GM23248 (cell line): ENCODE measurements at regions of chr20 and their contacts with region 1.

Region 1: DNA sequence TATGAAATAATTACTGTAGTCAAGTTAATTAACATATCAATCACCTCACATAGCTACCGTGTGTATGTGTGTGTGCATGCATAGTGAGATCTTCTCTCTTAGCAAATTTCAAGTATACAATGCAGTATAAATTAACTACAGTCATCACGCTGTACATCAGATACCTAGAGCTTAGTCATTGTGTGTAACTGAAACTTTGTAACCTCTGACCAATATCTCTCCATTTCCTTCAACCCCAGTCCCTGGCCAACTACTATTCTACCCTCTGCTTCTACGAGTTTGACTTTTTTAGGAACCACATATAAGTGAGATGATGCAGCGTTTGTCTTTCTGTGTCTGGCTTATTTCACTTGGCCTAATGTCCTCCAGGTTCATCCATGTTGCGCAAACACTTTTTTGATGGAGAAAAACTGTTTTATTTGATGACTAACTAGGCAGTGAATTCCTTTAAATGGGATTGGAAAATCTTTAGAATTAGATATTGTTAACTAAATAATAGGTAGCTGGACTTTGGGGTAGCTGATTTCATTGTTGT is 459.5 kb downstream of the DHX35 start:
- DNase-seq: peak; percentile 4
- H3K4me3 ChIP-seq: no peak overlapping the region
- H3K27ac ChIP-seq: no peak overlapping the region
- H3K4me1 ChIP-seq: no peaks in the 10 kb centered on the region
- H3K27me3 ChIP-seq: no peaks in the 10 kb centered on the region

Region 2: GRCh38 chr20:39112178-39112743 is 309.4 kb before region 1 on chr20:
- in situ Hi-C with region 1: no loop called
- DNase-seq: peak; percentile 62
- H3K4me3 ChIP-seq: no peak overlapping the region
- H3K27ac ChIP-seq: no peak overlapping the region
- H3K4me1 ChIP-seq: peaks cover 19% of the 10 kb centered on the region
- H3K27me3 ChIP-seq: peaks cover 18% of the 10 kb centered on the region

Region 3: DNA sequence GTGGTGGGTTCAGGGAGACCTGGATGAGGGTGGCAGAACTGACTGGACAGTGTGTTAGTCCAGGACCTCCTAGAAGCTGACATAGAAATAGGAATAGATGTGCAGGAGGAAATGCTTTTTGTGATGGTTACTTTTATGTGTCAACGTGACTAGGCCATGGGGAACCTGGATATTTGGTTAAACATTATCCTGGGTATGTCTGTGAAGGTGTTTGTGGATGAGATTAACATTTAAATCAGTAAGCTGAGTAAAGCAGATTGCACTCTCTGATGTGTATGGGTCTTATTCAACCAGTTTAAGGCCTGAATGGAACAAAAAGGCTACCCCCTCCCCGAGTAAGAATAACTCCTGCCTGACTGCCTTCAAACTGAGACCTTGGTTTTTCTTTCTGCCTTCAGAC is 240.1 kb before region 1 on chr20:
- in situ Hi-C with region 1: no loop called
- DNase-seq: no peak
- H3K4me3 ChIP-seq: no peak overlapping the region
- H3K27ac ChIP-seq: no peak overlapping the region
- H3K4me1 ChIP-seq: no peaks in the 10 kb centered on the region
- H3K27me3 ChIP-seq: no peaks in the 10 kb centered on the region

Region 4: DNA sequence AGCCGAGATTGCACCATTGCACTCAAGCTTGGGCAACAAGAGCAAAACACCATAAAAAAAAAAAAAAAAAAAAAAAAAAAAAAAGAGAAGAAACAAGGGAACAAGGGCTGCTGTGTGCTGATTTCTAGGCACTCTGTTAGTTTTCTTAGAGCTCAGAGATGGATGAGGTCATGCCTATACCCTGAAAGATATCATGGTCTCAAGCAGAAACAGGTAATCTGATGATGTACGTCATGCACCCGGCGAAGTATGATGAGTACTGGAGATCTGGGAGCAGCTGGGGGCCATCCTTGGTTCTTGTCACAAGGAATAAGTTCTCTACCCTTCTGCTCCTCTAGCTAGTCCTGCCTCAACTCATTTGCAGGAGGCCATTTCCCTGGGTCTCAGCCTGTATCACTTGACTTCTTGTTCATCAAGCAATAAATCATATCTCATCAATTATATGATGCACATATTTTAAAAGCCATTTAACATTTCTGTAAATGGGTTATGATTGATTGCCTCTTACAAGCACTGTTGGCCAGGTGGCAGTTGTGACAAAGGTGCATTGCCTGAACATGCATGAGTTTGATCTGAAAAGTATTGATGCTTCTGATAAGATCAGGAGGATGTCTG is 57.7 kb after region 1 on chr20:
- in situ Hi-C with region 1: no loop called
- DNase-seq: no peak
- H3K4me3 ChIP-seq: no peak overlapping the region
- H3K27ac ChIP-seq: no peak overlapping the region
- H3K4me1 ChIP-seq: no peaks in the 10 kb centered on the region
- H3K27me3 ChIP-seq: no peaks in the 10 kb centered on the region

Region 5: GRCh38 chr20:40945754-40946450 is 1524.3 kb after region 1 on chr20:
- in situ Hi-C with region 1: loop called (anchors 25 kb)
- DNase-seq: peak; percentile 68
- H3K4me3 ChIP-seq: no peak overlapping the region
- H3K27ac ChIP-seq: no peak overlapping the region
- H3K4me1 ChIP-seq: 0 out of 2 replicates have a peak, but pooled peaks cover 7% of the 10 kb centered on the region
- H3K27me3 ChIP-seq: no peaks in the 10 kb centered on the region